Left ventricle myocardium superior (tissue), 1 donor: ENCODE measurements at regions of chr7 and their contacts with region 1.

Region 1: GRCh38 chr7:35716038-35716803 is 21.3 kb upstream of the HERPUD2 start:
- DNase-seq: peak; percentile 50
- ATAC-seq: peak; percentile 79

Region 2: DNA sequence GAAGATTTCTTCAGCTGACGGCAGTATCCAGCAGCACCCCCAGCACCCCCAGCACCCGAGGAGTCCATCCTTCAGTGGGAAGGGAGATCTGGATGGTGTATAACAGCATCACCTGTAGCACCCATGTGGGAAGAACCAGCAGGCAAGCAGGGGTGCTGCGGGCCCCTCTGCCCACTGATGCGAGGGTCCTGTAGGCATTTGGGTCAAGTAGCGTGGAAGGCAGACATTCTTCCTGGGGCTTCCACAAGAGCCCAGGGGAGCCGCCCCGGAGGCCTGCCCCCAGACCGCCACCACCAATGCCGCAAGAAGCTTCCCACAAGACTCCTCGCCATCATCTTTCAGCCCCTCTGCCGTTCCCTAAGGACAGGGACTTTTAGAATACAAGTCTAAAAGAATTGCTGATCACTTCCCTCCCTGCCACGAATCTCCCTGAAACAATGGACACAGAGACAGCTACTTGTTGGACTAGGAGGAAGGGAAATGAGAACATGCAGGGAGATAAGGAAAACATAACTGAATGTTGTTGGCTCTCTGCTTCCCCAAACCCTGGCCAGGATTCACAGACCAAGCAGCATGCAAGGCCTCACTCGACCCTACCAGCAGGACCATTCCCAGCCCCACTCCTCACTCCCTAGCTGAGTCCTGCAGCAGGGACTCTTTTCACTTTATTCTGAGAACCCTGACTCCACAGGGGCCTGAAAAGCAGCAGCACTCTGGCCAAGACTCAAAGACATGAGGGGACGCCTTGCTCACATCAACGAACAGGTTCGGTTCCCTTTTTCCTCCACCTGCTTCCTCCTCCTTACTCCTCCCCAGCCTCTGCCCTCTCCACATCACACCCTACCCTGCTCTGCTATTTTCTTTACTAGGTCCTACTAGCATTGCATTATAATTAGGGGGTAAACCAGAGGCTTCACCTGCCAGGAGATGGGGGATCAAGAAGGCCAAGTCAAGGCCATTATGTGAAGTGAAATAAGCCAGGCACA is 185.8 kb before region 1 on chr7:
- intact Hi-C with region 1: no loop called
- DNase-seq: no peak
- ATAC-seq: no peak

Region 3: GRCh38 chr7:35906191-35906908 is 190.1 kb after region 1 on chr7:
- intact Hi-C with region 1: loop called (anchors 2 kb)
- DNase-seq: no peak
- ATAC-seq: peak; percentile 91